Ascending aorta (tissue), 2 donors: ENCODE measurements at regions of chr9 and their contacts with region 1.

Region 1: GRCh38 chr9:76393963-76394679 is at the start of gene RFK:
- DNase-seq: peak; percentile 49 to 96
- H3K4me3 ChIP-seq: peak within 1 kb of the TSS; percentile 95 to 97
- H3K27ac ChIP-seq: peak within 1 kb of the TSS; percentile 94 to 97
- H3K4me1 ChIP-seq: peaks cover 0 to 11% of the 10 kb centered on the region in 2 donors
- H3K27me3 ChIP-seq: no peaks in the 10 kb centered on the region
- CTCF ChIP-seq: peak; percentile 48 to 53 (median 52)
- total RNA-seq, gene RFK: 8.9 TPM

Region 2: DNA sequence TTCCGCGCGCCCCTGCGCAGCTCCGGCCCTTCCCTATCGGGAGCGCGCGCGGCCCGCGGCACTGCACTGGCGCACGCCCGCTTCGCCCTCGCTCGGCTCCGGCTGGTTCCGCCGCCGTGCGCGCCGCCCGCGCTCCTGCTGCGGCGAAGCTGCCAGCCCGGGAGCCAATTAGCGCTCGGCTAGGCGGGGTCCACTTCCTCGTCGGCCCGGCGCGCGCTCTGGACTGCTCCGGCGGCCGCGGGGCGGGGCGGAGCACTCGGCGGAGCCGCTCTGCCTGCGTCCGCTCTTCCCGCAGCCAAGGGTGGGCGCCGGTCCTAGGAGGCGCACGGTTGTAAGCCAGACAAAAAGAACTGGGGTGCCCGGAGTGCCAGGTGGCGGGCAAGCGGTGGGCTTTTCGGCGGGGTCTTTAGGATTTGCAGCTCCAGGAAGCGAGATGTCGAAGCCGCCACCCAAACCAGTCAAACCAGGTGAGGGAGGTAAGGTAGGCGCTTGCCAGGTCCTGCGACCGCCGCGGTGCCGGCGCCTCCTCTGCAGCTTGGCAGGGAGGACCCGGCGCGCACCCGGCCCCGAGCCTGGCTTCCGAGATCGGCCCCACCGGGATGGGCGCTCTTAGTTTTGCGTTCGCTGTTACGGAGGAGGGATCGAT is 1305.7 kb before region 1 on chr9 and contains the start of gene OSTF1:
- intact Hi-C with region 1: loop called (anchors 5 kb)
- DNase-seq: peak; percentile 82 to 97
- H3K4me3 ChIP-seq: peak within 1 kb of the TSS; percentile 97 to 99
- H3K27ac ChIP-seq: peak within 1 kb of the TSS; percentile 92 to 96
- H3K4me1 ChIP-seq: peaks cover 6 to 22% of the 10 kb centered on the region in 2 donors
- H3K27me3 ChIP-seq: no peaks in the 10 kb centered on the region
- CTCF ChIP-seq: peak in 1 of 3 experiments; percentile 6
- total RNA-seq, gene OSTF1: 25.1 TPM

Region 3: DNA sequence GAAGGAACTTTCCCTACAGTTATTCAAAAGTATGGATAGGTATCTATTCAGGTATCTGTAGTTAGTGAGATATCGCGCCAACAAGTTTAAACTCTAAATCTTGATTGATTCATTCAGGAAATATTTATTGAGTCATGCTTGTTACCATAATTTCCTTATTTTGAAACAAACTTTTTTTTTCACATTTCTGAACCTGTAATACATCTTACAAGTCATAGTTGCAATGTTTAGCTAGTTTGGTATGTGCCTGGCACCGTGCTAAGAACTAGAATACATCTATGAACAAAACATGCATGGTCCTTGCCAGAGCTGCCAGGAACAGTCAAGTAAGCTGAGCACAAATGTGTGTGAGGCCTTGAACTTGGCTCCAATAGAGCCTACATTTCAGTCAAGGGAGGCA is 277.2 kb before region 1 on chr9:
- intact Hi-C with region 1: loop called (anchors 5 kb)
- DNase-seq: peak; percentile 41 to 94
- H3K4me3 ChIP-seq: no peak overlapping the region
- H3K27ac ChIP-seq: peak overlapping the region; percentile 54 to 81
- H3K4me1 ChIP-seq: peaks cover 9 to 38% of the 10 kb centered on the region in 2 donors
- H3K27me3 ChIP-seq: no peaks in the 10 kb centered on the region
- CTCF ChIP-seq: no peak

Region 4: DNA sequence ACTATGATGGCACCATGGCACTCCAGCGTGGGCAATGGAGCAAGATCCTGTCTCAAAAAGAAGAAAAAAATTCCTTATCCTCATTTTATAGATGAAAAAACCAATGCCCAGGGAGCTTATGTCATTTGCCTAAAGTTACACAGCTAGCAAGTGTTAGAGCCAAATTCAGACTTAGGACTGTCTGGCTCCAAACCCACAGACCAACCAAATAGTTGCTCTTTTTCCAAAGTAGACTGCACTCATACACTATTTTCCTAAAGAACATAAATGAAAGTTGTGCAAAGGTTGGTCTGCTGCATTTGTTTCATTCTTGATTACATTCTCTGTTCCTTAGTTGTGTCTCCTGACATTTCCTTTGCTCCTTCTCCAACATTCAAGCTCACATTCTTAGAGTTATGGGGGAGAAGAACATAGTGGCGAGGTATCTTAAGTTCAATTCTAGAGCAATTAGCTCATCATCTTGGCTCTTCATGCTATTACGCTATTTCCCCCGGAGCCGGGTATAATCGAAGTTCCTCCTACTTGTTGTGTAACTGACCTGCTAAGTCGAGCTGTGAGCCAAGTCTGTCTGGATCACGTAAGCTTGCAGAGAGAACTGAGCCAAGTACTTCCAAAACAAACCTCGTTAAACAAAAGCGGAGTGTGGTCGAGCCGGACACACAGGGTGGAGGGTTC is 138.2 kb before region 1 on chr9:
- intact Hi-C with region 1: loop called (anchors 5 kb)
- DNase-seq: peak; percentile 37 to 91
- H3K4me3 ChIP-seq: peak overlapping the region; percentile 11 to 51
- H3K27ac ChIP-seq: peak overlapping the region; percentile 79 to 89
- H3K4me1 ChIP-seq: peaks cover 6 to 12% of the 10 kb centered on the region in 2 donors
- H3K27me3 ChIP-seq: no peaks in the 10 kb centered on the region
- CTCF ChIP-seq: no peak

Region 5: GRCh38 chr9:77841739-77842386 is 1447.7 kb after region 1 on chr9:
- intact Hi-C with region 1: loop called (anchors 10 kb)
- DNase-seq: no peak
- H3K4me3 ChIP-seq: no peak overlapping the region
- H3K27ac ChIP-seq: peak overlapping the region in 1 of 2 donors; percentile 20
- H3K4me1 ChIP-seq: peaks cover 3 to 33% of the 10 kb centered on the region in 2 donors
- H3K27me3 ChIP-seq: no peaks in the 10 kb centered on the region
- CTCF ChIP-seq: peak in 2 of 3 experiments; percentile 30 to 45